PC-9 (cell line): ENCODE measurements at regions of chr11 and their contacts with region 1.

Region 1: GRCh38 chr11:86193297-86194095 is 51.1 kb upstream of the EED start:
- DNase-seq: peak; percentile 63 to 82
- H3K4me3 ChIP-seq: peak overlapping the region; percentile 20; the same call in 1 of the 2 replicates
- H3K27ac ChIP-seq: peak overlapping the region; percentile 37
- H3K4me1 ChIP-seq: peaks cover 13% of the 10 kb centered on the region
- H3K27me3 ChIP-seq: no peaks in the 10 kb centered on the region
- CTCF ChIP-seq: peak; percentile 92

Region 2: GRCh38 chr11:86041975-86042378 is 151.5 kb before region 1 on chr11:
- CTCF ChIA-PET with region 1: interaction called, 15 read pairs
- POLR2A ChIA-PET with region 1: interaction called, 5 read pairs
- intact Hi-C with region 1: loop called (anchors 1 kb)
- DNase-seq: peak; percentile 55 to 79
- H3K4me3 ChIP-seq: no peak overlapping the region
- H3K27ac ChIP-seq: no peak overlapping the region
- H3K4me1 ChIP-seq: peaks cover 34% of the 10 kb centered on the region
- H3K27me3 ChIP-seq: no peaks in the 10 kb centered on the region
- CTCF ChIP-seq: peak; percentile 100

Region 3: GRCh38 chr11:86056351-86056854 is 137.1 kb before region 1 on chr11:
- CTCF ChIA-PET with region 1: no interaction called
- POLR2A ChIA-PET with region 1: no interaction called
- intact Hi-C with region 1: no loop called
- DNase-seq: no peak
- H3K4me3 ChIP-seq: no peak overlapping the region
- H3K27ac ChIP-seq: no peak overlapping the region
- H3K4me1 ChIP-seq: no peaks in the 10 kb centered on the region
- H3K27me3 ChIP-seq: no peaks in the 10 kb centered on the region
- CTCF ChIP-seq: no peak

Region 4: GRCh38 chr11:86151174-86152005 is 42.1 kb before region 1 on chr11:
- CTCF ChIA-PET with region 1: no interaction called
- POLR2A ChIA-PET with region 1: no interaction called
- intact Hi-C with region 1: loop called (anchors 2 kb)
- DNase-seq: peak; percentile 45 to 67
- H3K4me3 ChIP-seq: no peak overlapping the region
- H3K27ac ChIP-seq: peak overlapping the region; percentile 38
- H3K4me1 ChIP-seq: peaks cover 27% of the 10 kb centered on the region
- H3K27me3 ChIP-seq: no peaks in the 10 kb centered on the region
- CTCF ChIP-seq: no peak

Region 5: DNA sequence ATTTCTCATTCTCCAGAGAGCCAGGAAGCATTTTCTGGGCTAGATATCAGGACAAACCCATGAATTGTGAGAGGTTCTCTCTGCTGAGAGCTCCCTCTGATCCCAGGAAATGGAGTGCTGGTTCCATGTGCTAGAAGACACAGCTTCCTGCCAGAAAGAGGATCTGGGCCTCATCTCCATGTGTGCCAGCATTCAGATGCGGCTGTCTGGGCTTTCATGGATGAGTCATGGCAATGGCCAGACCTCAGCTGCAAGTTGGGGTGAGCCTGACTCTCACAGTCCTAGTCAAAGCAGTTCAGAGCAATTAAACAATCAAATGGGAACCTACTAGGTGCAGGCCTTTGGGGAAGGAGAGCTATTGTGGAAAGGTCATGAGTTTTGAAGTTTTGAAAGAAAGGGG is 31.3 kb before region 1 on chr11:
- CTCF ChIA-PET with region 1: interaction called, 4 read pairs
- POLR2A ChIA-PET with region 1: interaction called, 19 read pairs
- intact Hi-C with region 1: no loop called
- DNase-seq: no peak
- H3K4me3 ChIP-seq: no peak overlapping the region
- H3K27ac ChIP-seq: no peak overlapping the region
- H3K4me1 ChIP-seq: peaks cover 56% of the 10 kb centered on the region
- H3K27me3 ChIP-seq: no peaks in the 10 kb centered on the region
- CTCF ChIP-seq: no peak

Region 6: DNA sequence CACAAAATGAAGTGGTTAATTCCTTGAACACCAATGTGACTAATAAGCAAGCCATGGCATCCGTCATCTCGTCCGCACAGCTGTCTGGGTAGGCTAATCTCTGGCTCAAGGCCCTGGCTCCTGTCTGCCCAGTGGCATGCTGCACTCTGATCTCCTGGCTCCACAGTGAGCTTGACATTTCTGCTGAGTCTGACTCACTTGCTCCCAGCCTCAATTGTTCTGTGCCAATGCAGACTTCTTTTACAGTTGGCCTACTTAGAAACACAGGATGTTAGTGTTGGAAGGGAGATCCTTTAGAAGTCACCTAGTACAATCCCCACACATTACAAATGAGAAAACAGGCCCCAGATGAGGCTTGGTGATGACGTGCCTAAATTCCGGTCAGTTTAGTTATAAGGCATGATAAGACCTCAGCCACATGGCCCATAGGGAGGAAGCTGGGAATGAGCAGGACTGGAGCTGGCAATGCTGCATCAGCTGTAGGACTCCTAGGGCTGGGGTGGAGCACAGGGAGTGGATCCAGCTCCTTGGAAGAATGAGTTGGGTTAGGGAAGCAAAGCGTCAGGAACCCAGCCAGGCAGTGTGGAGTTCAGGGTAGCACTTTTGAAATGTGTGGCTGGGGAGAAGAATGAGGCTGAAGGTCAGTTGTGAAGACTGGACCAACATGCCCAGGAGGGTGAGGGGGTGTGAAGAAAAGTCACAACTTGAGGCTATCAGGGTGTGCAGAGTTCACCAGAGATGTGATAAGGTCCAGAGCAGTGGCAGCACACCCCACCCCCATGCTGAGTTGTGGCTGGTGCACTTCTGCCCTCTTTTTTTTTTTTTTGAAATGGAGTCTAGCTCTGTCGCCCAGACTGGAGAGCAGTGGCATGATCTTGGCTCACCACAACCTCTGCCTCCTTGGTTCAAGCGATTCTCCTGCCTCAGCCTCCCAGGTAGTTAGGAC is 19.1 kb before region 1 on chr11:
- CTCF ChIA-PET with region 1: interaction called, 11 read pairs
- POLR2A ChIA-PET with region 1: no interaction called
- intact Hi-C with region 1: no loop called
- DNase-seq: peak; percentile 80 to 98
- H3K4me3 ChIP-seq: no peak overlapping the region
- H3K27ac ChIP-seq: peak overlapping the region; percentile 79
- H3K4me1 ChIP-seq: peaks cover 62% of the 10 kb centered on the region
- H3K27me3 ChIP-seq: no peaks in the 10 kb centered on the region
- CTCF ChIP-seq: no peak

Region 7: DNA sequence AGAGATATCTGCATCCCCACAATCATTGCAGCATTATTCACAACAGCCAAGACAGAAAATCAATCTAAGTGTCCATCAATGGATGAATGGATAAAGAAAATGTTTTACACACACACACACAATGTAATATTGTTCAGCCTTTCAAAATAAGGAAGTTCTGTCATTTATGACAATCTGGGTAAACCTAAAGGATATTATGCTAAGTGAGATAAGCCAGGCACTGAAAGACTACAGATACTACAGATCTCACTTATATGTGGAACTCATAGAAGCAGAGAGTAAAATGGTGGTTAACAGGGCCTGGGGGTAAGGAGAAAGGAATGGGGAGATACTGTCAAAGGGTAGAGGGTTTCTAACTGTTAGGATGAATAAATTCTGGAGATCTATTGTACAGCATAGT is 15.1 kb after region 1 on chr11:
- CTCF ChIA-PET with region 1: interaction called, 19 read pairs
- POLR2A ChIA-PET with region 1: interaction called, 4 read pairs
- intact Hi-C with region 1: no loop called
- DNase-seq: no peak
- H3K4me3 ChIP-seq: no peak overlapping the region
- H3K27ac ChIP-seq: no peak overlapping the region
- H3K4me1 ChIP-seq: 0 out of 2 replicates have a peak, but pooled peaks cover 5% of the 10 kb centered on the region
- H3K27me3 ChIP-seq: no peaks in the 10 kb centered on the region
- CTCF ChIP-seq: no peak

Region 8: DNA sequence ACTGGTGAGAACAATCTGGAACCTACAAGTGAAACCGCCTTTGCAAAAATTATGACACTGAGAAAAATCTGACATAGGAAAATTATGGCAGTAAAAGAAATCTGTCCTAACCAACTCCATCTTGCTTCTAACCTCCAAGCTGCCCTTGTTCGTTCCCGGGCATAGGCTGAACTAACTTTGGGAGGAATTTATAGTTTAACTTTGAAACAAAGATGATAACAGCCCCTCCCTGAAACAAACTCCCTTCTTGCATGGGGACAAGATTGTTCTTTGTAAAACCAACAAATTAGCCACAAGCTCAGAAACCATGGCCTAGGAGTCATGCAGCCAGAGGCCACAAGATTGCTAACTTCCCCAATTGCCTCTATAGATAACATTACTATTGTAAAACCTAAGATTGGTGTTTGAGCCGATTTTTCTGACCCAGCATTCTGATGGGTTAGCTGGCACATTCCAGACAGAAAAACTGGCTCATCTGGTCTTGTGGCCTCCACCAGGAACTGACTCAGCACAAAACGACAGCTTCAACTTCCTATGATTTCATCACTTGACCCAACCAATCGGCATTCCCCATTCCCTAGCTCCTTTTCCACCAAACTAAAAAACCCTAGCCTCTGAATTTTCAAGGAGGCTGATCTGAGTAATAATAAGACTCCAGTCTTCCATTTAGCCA is 177.6 kb after region 1 on chr11:
- CTCF ChIA-PET with region 1: no interaction called
- POLR2A ChIA-PET with region 1: no interaction called
- intact Hi-C with region 1: no loop called
- DNase-seq: peak; percentile 34 to 80
- H3K4me3 ChIP-seq: peak overlapping the region; percentile 9; the same call in 1 of the 2 replicates
- H3K27ac ChIP-seq: peak overlapping the region; percentile 7
- H3K4me1 ChIP-seq: peaks cover 14% of the 10 kb centered on the region
- H3K27me3 ChIP-seq: no peaks in the 10 kb centered on the region
- CTCF ChIP-seq: no peak

Region 9: DNA sequence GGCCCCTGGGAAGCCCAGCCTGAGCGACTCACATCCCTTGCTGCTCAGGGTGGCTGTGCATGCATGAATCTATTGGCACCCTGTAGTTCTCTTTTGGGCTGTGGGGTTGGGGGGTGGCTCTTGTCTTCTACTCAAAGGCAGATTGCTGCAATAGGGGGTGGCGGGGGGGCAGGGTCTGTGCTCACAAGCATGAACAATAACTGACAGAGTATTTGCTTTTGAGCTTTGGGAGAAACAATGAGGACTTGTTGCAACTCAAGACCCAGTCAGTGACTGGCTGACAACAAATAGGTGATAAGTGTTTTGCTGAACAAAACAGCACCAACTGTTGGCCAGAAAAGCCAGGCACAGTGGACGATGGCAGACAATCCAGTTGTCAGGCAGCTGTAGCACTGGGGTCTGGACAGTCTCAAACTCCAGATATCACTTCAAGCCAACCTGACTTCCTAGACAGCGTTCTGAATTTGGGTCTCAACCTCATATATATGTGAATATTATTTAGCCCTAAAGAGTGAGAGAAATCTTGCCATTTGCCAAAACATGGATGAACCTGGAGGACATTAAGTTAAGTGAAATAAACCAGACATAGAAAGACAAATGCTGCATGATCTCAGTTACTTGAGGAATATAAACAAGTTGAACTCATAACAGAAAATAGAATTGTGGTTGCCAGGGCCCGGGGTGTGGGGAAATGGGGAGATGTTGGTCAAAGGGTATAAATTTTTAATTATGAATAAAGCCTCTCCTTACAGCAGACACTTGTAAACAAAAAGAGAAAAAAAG is 417.3 kb after region 1 on chr11:
- CTCF ChIA-PET with region 1: no interaction called
- POLR2A ChIA-PET with region 1: no interaction called
- intact Hi-C with region 1: no loop called
- DNase-seq: no peak
- H3K4me3 ChIP-seq: no peak overlapping the region
- H3K27ac ChIP-seq: no peak overlapping the region
- H3K4me1 ChIP-seq: peaks cover 22% of the 10 kb centered on the region
- H3K27me3 ChIP-seq: no peaks in the 10 kb centered on the region
- CTCF ChIP-seq: no peak